ENCODE measurements at regions of chr7 and their contacts with region 1.

Region 1: GRCh38 chr7:48832303-48832845 is 92.0 kb upstream of the CDC14C start:
- DNase-seq: peak in 6 of 10 donors; percentile 6 to 67 (median 44)
- H3K4me3 ChIP-seq: peak overlapping the region in 1 of 59 donors; percentile 7
- H3K27ac ChIP-seq: peak overlapping the region in 38 of 59 donors; percentile 13 to 77 (median 54)
- H3K27me3 ChIP-seq: peaks cover 0 to 4% (median 0%) of the 10 kb centered on the region in 45 donors
- CTCF ChIP-seq: no peak

Region 2: GRCh38 chr7:48681006-48681405 is 151.4 kb before region 1 on chr7:
- intact Hi-C with region 1: loop called in 1 of 2 experiments (anchors 10 kb)
- DNase-seq: no peak
- H3K4me3 ChIP-seq: no peak overlapping the region
- H3K27ac ChIP-seq: no peak overlapping the region
- H3K27me3 ChIP-seq: no peaks in the 10 kb centered on the region
- CTCF ChIP-seq: no peak

Measured in dorsolateral prefrontal cortex (tissue), 120 donors.